Endothelial cell of umbilical vein (primary cell): ENCODE measurements at regions of chr13 and their contacts with region 1.

Region 1: DNA sequence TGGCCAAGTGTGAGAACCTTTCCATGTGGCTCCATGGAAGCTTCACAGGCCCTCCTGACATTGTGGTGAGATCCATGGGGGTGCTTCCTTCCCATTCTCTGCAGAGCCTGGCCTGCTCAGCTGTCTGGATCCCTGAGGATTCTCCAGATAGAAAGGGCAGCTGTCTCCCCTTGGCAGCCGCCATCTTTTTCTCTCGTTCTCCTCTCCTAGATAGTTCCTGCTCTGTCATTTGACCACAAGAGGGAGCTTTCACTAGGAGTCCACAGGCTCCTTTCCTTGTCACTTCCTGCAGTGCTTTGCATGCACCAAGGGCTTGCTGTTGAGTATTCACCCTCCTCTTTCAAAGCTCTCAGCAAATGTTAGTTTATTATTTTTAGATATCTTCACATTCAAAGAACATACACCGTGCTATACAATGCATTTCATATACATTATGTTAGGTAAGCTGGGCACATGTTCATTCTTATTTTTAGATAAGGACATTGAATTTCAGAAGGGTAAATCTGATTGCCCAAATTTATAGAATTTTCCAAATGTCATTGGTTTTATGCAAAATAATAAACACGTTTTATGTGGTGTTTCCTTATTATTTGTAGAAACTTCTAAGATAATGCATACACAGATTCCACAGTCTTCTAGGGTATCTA is 133.2 kb downstream of the FRY start:
- DNase-seq: peak; percentile 51
- H3K4me3 ChIP-seq: no peak overlapping the region
- H3K27ac ChIP-seq: no peak overlapping the region
- H3K4me1 ChIP-seq: no peaks in the 10 kb centered on the region
- H3K27me3 ChIP-seq: no peaks in the 10 kb centered on the region
- CTCF ChIP-seq: peak; percentile 65 to 66
- POLR2A ChIP-seq: no peak

Region 2: GRCh38 chr13:32107474-32107873 is 57.3 kb before region 1 on chr13:
- CTCF ChIA-PET with region 1: no interaction called
- POLR2A ChIA-PET with region 1: no interaction called
- dilution Hi-C with region 1: no loop called
- intact Hi-C with region 1: no loop called
- DNase-seq: peak; percentile 10
- H3K4me3 ChIP-seq: no peak overlapping the region
- H3K27ac ChIP-seq: no peak overlapping the region
- H3K4me1 ChIP-seq: peaks cover 2% of the 10 kb centered on the region
- H3K27me3 ChIP-seq: no peaks in the 10 kb centered on the region
- CTCF ChIP-seq: no peak
- POLR2A ChIP-seq: no peak

Region 3: DNA sequence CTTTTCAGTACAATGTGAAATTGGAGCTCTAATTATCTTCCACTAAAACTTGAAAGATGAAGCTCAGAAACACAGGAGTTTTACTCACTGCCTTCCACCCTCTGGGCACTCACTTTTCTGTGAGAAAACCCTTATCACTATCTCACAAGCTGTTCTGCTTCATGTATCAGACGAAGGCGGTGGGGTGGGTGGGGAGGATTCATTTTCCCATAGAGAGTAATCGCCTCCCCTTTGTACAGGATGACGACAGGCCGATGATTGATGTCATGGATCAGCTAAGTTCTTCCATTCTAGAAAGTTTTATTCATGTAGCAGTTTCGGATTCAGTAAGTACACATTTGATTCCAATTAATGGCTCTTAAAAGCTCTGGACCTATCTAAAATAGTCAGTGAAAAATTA is 10.6 kb after region 1 on chr13:
- CTCF ChIA-PET with region 1: interaction called, 23 read pairs
- POLR2A ChIA-PET with region 1: no interaction called
- dilution Hi-C with region 1: no loop called
- intact Hi-C with region 1: no loop called
- DNase-seq: no peak
- H3K4me3 ChIP-seq: no peak overlapping the region
- H3K27ac ChIP-seq: no peak overlapping the region
- H3K4me1 ChIP-seq: no peaks in the 10 kb centered on the region
- H3K27me3 ChIP-seq: no peaks in the 10 kb centered on the region
- CTCF ChIP-seq: no peak
- POLR2A ChIP-seq: no peak

Region 4: DNA sequence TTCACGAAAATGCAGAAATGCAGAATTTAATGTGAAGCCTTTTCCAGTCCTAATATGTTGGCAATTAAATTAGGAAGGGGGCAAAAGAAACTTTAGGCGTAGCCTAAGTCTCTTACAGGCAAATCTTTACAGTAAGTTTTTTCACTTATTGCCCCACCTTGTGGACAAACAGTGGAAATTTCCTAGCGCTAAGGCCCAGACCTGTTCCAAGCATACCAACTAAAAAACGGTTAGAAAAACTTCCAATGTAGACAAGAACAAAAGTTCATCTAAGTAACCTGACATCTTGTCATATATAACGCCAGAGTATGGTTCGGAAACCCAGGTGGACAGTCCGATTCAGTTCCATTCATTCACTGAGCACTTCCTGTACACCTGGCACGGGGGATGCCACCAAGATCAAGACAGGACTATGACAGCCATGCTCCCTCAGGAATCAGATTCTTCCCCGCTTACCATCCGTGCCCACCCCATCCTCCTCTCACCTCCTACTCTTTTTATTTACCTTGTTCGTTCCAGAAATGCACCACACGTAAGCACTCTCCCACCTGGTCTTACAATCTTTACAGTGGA is 145.5 kb after region 1 on chr13:
- CTCF ChIA-PET with region 1: interaction called, 10 read pairs
- POLR2A ChIA-PET with region 1: no interaction called
- dilution Hi-C with region 1: no loop called
- intact Hi-C with region 1: loop called (anchors 1 kb)
- DNase-seq: peak; percentile 72
- H3K4me3 ChIP-seq: no peak overlapping the region
- H3K27ac ChIP-seq: no peak overlapping the region
- H3K4me1 ChIP-seq: peaks cover 14% of the 10 kb centered on the region
- H3K27me3 ChIP-seq: no peaks in the 10 kb centered on the region
- CTCF ChIP-seq: peak; percentile 56 to 60
- POLR2A ChIP-seq: no peak